ENCODE measurements at regions of chr6 and their contacts with region 1.

Region 1: GRCh38 chr6:87701676-87702588 is at the start of gene AKIRIN2:
- DNase-seq: peak; percentile 99
- ATAC-seq: peak; percentile 77
- H3K4me3 ChIP-seq: peak within 1 kb of the TSS; percentile 86 to 100 (median 92)
- H3K4me3 Mint-ChIP-seq: peak within 1 kb of the TSS; percentile 97
- H3K27ac ChIP-seq: peak within 1 kb of the TSS; percentile 96 to 98
- H3K27ac Mint-ChIP-seq: peak within 1 kb of the TSS; percentile 99
- H3K4me1 ChIP-seq: peaks cover 16 to 32% of the 10 kb centered on the region in 2 donors
- H3K4me1 Mint-ChIP-seq: peaks cover 53% of the 10 kb centered on the region
- H3K27me3 ChIP-seq: no peaks in the 10 kb centered on the region
- H3K27me3 Mint-ChIP-seq: no peaks in the 10 kb centered on the region
- CTCF ChIP-seq: no peak
- total RNA-seq, gene AKIRIN2: 105 and 108 TPM in 2 replicates

Region 2: GRCh38 chr6:87154993-87155841 is 546.7 kb before region 1 on chr6 and contains the start of gene ZNF292:
- CTCF ChIA-PET with region 1: no interaction called
- POLR2A ChIA-PET with region 1: interaction called, 6 read pairs
- intact Hi-C with region 1: loop called (anchors 1 kb)
- DNase-seq: peak; percentile 98
- ATAC-seq: peak; percentile 82
- H3K4me3 ChIP-seq: peak within 1 kb of the TSS; percentile 83 to 96 (median 87)
- H3K4me3 Mint-ChIP-seq: peak within 1 kb of the TSS; percentile 92
- H3K27ac ChIP-seq: peak within 1 kb of the TSS; percentile 96 to 97
- H3K27ac Mint-ChIP-seq: peak within 1 kb of the TSS; percentile 97
- H3K4me1 ChIP-seq: peaks cover 28 to 35% of the 10 kb centered on the region in 2 donors
- H3K4me1 Mint-ChIP-seq: peaks cover 51% of the 10 kb centered on the region
- H3K27me3 ChIP-seq: no peaks in the 10 kb centered on the region
- H3K27me3 Mint-ChIP-seq: no peaks in the 10 kb centered on the region
- CTCF ChIP-seq: no peak
- total RNA-seq, gene ZNF292: 84.1 and 86.5 TPM in 2 replicates

Region 3: GRCh38 chr6:87589693-87590549 is 112.0 kb before region 1 on chr6 and contains the starts of genes ORC3 and RARS2:
- CTCF ChIA-PET with region 1: interaction called, 3 read pairs
- POLR2A ChIA-PET with region 1: interaction called, 4 read pairs
- intact Hi-C with region 1: loop called (anchors 1 kb)
- DNase-seq: peak; percentile 94
- ATAC-seq: peak; percentile 99
- H3K4me3 ChIP-seq: peak within 1 kb of the TSS; percentile 74 to 100 (median 96)
- H3K4me3 Mint-ChIP-seq: peak within 1 kb of the TSS; percentile 96
- H3K27ac ChIP-seq: peak within 1 kb of the TSS; percentile 78 to 91
- H3K27ac Mint-ChIP-seq: peak within 1 kb of the TSS; percentile 88
- H3K4me1 ChIP-seq: peaks cover 27 to 28% of the 10 kb centered on the region in 2 donors
- H3K4me1 Mint-ChIP-seq: peaks cover 56% of the 10 kb centered on the region
- H3K27me3 ChIP-seq: no peaks in the 10 kb centered on the region
- H3K27me3 Mint-ChIP-seq: no peaks in the 10 kb centered on the region
- CTCF ChIP-seq: no peak
- total RNA-seq, gene ORC3: 27.8 and 31.2 TPM in 2 replicates
- total RNA-seq, gene RARS2: 37.9 and 38.7 TPM in 2 replicates

Region 4: DNA sequence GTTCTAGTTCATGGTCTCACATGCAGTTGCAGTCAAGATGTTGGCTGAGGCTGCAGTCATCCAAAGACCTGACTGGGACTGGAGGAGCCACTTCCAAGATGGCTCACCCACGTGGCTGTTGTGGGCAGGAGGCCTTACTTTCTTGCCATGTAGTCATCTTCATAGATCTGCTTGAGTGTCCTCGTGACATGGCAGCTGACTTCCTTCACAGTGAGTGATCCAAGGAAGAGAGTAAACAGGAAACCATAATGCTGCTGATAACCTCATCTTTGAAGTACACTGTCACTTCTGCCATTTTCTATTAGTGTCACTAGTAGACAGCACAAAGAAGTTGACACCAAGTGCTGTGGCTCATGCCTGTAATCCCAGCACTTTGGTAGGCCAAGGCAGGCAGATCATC is 40.2 kb after region 1 on chr6:
- CTCF ChIA-PET with region 1: no interaction called
- POLR2A ChIA-PET with region 1: no interaction called
- intact Hi-C with region 1: loop called (anchors 1 kb)
- DNase-seq: peak; percentile 80
- ATAC-seq: peak; percentile 90
- H3K4me3 ChIP-seq: no peak overlapping the region
- H3K4me3 Mint-ChIP-seq: peak overlapping the region; percentile 52
- H3K27ac ChIP-seq: peak overlapping the region; percentile 30 to 62
- H3K27ac Mint-ChIP-seq: peak overlapping the region; percentile 91
- H3K4me1 ChIP-seq: peaks cover 14 to 21% of the 10 kb centered on the region in 2 donors
- H3K4me1 Mint-ChIP-seq: peaks cover 24% of the 10 kb centered on the region
- H3K27me3 ChIP-seq: no peaks in the 10 kb centered on the region
- H3K27me3 Mint-ChIP-seq: no peaks in the 10 kb centered on the region
- CTCF ChIP-seq: no peak

Region 5: GRCh38 chr6:87832025-87832825 is 130.3 kb after region 1 on chr6:
- CTCF ChIA-PET with region 1: interaction called, 8 read pairs
- POLR2A ChIA-PET with region 1: interaction called, 3 read pairs
- intact Hi-C with region 1: loop called (anchors 2 kb)
- DNase-seq: peak; percentile 73
- ATAC-seq: peak; percentile 74
- H3K4me3 ChIP-seq: peak overlapping the region; percentile 42 to 81 (median 64)
- H3K4me3 Mint-ChIP-seq: peak overlapping the region; percentile 89
- H3K27ac ChIP-seq: peak overlapping the region; percentile 74 to 89
- H3K27ac Mint-ChIP-seq: peak overlapping the region; percentile 78
- H3K4me1 ChIP-seq: peaks cover 6 to 7% of the 10 kb centered on the region in 2 donors
- H3K4me1 Mint-ChIP-seq: peaks cover 14% of the 10 kb centered on the region
- H3K27me3 ChIP-seq: no peaks in the 10 kb centered on the region
- H3K27me3 Mint-ChIP-seq: no peaks in the 10 kb centered on the region
- CTCF ChIP-seq: peak; percentile 76

Region 6: DNA sequence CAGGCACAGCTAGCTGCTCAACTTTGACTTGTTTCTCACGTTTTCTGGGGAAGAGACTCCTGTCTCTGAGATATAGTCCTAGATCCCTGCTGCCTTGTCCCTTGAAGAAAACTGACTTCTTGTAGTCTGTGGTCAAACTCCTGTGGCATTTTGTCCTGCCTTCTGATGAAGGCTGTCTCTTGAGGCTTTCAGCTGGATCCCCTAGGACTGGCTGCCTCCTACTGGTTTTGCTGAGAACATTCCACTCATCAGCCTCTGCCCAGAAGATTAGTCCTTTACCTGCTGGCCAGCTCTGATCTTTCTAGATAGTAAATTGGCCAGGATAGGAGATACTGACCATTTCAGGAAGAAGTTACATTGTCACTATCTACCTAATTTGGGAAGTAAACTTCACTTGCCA is 536.1 kb after region 1 on chr6:
- CTCF ChIA-PET with region 1: interaction called, 3 read pairs
- POLR2A ChIA-PET with region 1: no interaction called
- intact Hi-C with region 1: loop called (anchors 10 kb)
- DNase-seq: peak; percentile 78
- ATAC-seq: peak; percentile 78
- H3K4me3 ChIP-seq: no peak overlapping the region
- H3K4me3 Mint-ChIP-seq: no peak overlapping the region
- H3K27ac ChIP-seq: no peak overlapping the region
- H3K27ac Mint-ChIP-seq: no peak overlapping the region
- H3K4me1 ChIP-seq: peaks cover 0 to 4% of the 10 kb centered on the region in 2 donors
- H3K4me1 Mint-ChIP-seq: peaks cover 7% of the 10 kb centered on the region
- H3K27me3 ChIP-seq: no peaks in the 10 kb centered on the region
- H3K27me3 Mint-ChIP-seq: no peaks in the 10 kb centered on the region
- CTCF ChIP-seq: peak; percentile 83

Region 7: DNA sequence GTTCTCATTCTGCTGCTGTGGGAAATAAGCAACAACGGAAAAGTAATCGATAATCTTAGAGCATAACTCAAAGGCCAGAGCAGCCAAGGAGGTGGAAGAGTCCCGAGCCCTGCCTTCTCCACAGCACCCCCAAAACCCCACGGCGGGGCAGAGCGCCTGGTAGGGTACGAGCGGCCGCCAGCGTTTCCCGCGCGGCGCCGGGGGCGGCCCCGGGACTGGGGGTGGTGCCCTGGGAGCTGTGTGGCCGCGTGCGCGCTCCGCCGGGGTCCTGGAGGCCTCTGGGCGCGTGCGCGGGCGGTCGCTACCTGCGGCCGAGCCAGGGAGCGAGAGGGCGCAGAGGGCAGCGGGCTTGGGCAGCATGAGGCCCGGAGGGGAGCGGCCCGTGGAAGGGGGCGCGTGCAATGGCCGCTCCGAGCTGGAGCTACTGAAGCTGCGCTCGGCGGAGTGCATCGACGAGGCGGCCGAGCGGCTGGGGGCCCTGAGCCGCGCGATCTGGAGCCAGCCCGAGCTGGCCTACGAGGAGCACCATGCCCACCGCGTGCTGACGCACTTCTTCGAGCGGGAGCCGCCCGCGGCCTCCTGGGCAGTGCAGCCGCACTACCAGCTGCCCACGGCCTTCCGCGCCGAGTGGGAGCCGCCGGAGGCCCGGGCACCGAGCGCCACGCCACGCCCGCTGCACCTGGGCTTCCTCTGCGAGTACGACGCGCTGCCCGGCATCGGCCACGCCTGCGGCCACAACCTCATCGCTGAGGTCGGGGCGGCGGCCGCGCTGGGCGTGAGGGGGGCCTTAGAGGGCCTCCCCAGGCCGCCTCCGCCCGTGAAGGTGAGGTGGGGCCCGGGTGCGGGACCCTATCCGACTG is 1444.1 kb after region 1 on chr6 and contains the start of gene PM20D2:
- CTCF ChIA-PET with region 1: no interaction called
- POLR2A ChIA-PET with region 1: no interaction called
- intact Hi-C with region 1: loop called (anchors 5 kb)
- DNase-seq: peak; percentile 78
- ATAC-seq: peak; percentile 77
- H3K4me3 ChIP-seq: peak within 1 kb of the TSS; percentile 65 to 85 (median 73)
- H3K4me3 Mint-ChIP-seq: peak within 1 kb of the TSS; percentile 95
- H3K27ac ChIP-seq: peak within 1 kb of the TSS; percentile 87 to 88
- H3K27ac Mint-ChIP-seq: peak within 1 kb of the TSS; percentile 94
- H3K4me1 ChIP-seq: peaks cover 9 to 11% of the 10 kb centered on the region in 2 donors
- H3K4me1 Mint-ChIP-seq: peaks cover 28% of the 10 kb centered on the region
- H3K27me3 ChIP-seq: no peaks in the 10 kb centered on the region
- H3K27me3 Mint-ChIP-seq: no peaks in the 10 kb centered on the region
- CTCF ChIP-seq: no peak
- total RNA-seq, gene PM20D2: 15.3 and 16.4 TPM in 2 replicates